Ascending aorta (tissue), 2 donors: ENCODE measurements at regions of chr22 and their contacts with region 1.

Region 1: DNA sequence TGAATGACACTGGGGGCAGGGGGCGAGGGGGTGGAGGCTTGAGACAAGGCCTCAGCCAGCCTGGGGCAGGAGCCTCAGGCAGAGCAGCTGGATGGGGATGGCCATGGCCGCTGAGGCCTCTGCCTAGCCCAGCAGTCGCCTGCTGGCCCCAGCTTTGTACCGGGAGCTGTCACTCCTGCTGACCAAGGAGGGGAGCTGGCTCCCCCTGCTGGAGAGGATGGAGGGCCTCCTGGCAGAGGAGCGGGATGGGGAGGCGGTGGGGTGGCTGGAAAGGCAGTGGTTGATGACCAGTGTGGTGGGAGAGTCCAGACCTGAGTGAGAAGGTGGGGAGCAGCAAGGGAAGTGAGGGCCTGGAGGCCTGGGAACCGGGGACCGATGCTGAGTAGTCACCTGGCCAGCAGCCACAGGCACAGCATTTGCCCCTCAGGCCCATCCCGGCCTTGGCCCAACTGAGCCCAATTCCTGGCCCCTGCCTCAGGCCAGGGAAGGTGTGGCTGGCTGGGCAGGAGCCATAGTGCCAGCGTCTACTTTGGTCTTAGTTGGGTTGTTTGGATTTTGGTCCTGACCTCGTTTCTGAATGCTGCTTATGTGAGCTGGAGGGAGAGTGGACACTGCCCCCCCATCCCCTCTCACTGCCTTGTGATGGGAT is 6.0 kb upstream of the SUSD2 start:
- DNase-seq: peak in 1 of 2 donors; percentile 92
- H3K4me3 ChIP-seq: no peak overlapping the region
- H3K27ac ChIP-seq: peak overlapping the region; percentile 84 to 92
- H3K4me1 ChIP-seq: peaks cover 15 to 35% of the 10 kb centered on the region in 2 donors
- H3K27me3 ChIP-seq: no peaks in the 10 kb centered on the region
- CTCF ChIP-seq: peak; percentile 92 to 94 (median 92)

Region 2: GRCh38 chr22:23893943-23894709 is 281.2 kb before region 1 on chr22 and contains the start of gene MIF:
- intact Hi-C with region 1: loop called (anchors 2 kb)
- DNase-seq: peak; percentile 78 to 97
- H3K4me3 ChIP-seq: peak within 1 kb of the TSS; percentile 87 to 89
- H3K27ac ChIP-seq: peak within 1 kb of the TSS; percentile 88 to 94
- H3K4me1 ChIP-seq: peaks cover 4 to 16% of the 10 kb centered on the region in 2 donors
- H3K27me3 ChIP-seq: no peaks in the 10 kb centered on the region
- CTCF ChIP-seq: peak; percentile 72 to 83 (median 82)
- total RNA-seq, gene MIF: 527 TPM

Region 3: DNA sequence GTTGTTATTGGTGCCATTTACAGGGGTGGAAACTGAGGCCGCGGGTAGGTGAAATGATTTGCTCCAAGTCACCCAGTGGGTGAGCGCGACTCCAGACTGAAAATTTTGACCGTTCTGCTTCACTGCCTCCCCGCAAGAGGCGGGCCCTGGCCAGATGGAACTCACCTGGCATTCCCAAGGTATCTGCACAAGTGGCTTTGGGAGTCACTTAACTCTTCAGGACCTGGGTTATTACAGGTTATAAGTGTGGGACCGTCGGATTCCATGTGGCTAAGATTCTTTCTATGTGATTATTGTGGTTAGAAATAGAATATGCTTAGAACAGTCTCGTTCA is 163.6 kb before region 1 on chr22:
- intact Hi-C with region 1: loop called (anchors 10 kb)
- DNase-seq: no peak
- H3K4me3 ChIP-seq: peak overlapping the region; percentile 89 to 97
- H3K27ac ChIP-seq: peak overlapping the region; percentile 62 to 69
- H3K4me1 ChIP-seq: peaks cover 4 to 5% of the 10 kb centered on the region in 2 donors
- H3K27me3 ChIP-seq: no peaks in the 10 kb centered on the region
- CTCF ChIP-seq: no peak

Region 4: GRCh38 chr22:24060375-24060788 is 114.9 kb before region 1 on chr22:
- intact Hi-C with region 1: loop called (anchors 5 kb)
- DNase-seq: peak in 1 of 2 donors; percentile 79
- H3K4me3 ChIP-seq: no peak overlapping the region
- H3K27ac ChIP-seq: peak overlapping the region; percentile 38 to 47
- H3K4me1 ChIP-seq: peaks cover 5 to 19% of the 10 kb centered on the region in 2 donors
- H3K27me3 ChIP-seq: no peaks in the 10 kb centered on the region
- CTCF ChIP-seq: no peak

Region 5: DNA sequence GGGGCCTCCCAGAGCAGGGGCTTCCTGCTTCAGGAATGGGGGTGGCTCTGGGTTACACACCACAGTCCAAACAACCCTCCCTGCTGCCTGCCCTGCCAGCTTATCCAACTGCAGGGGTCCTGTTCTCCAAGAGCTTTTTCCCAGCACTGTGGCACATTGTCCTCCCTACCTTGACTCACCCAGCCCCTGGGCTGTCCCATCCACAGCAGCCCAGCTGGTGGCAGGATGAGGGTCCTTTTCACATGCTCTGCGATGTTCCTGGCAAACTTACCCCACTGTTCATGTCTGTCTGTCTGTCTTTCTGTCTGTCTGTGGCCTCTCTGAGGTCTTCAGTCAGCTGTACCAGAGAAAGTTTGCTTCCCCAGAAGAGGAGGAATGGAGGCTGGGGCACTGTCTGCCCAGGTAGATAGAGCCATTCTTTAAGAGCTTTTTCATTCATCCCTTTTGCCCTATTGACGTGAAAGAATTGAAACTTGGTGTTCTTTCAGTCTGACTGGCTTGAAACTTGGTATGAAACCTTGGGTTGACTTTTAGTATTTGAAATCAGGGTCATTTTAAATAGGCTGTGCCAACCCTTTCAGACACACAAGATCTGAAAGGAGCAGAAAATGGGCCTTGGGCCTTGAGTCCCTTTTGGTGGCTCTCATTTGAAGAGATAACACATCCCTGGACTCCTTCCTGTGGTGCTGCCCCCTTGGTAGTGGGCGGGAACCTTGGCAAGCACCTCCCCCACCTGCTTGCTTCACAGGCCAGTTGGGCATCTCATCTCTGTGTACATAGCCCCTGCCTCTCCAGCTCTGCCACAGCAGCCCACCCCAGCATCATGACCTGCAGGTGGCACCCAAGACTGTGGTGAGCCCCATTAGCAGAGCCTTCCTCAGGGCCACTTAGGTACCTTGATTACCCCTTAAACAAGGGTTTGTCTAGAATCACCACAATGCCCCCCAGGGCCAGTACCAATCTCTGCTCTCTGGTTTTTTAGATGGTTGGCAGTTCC is 68.6 kb before region 1 on chr22:
- intact Hi-C with region 1: loop called (anchors 1 kb)
- DNase-seq: no peak
- H3K4me3 ChIP-seq: no peak overlapping the region
- H3K27ac ChIP-seq: peak overlapping the region; percentile 75 to 83
- H3K4me1 ChIP-seq: peaks cover 14 to 17% of the 10 kb centered on the region in 2 donors
- H3K27me3 ChIP-seq: no peaks in the 10 kb centered on the region
- CTCF ChIP-seq: peak in 2 of 3 experiments; percentile 14 to 47

Region 6: GRCh38 chr22:24133187-24133965 is 41.9 kb before region 1 on chr22:
- intact Hi-C with region 1: loop called (anchors 2 kb)
- DNase-seq: no peak
- H3K4me3 ChIP-seq: no peak overlapping the region
- H3K27ac ChIP-seq: peak overlapping the region; percentile 36 to 38
- H3K4me1 ChIP-seq: peaks cover 3 to 24% of the 10 kb centered on the region in 2 donors
- H3K27me3 ChIP-seq: no peaks in the 10 kb centered on the region
- CTCF ChIP-seq: peak; percentile 24 to 39 (median 39)

Region 7: GRCh38 chr22:24156913-24157821 is 18.1 kb before region 1 on chr22:
- intact Hi-C with region 1: loop called (anchors 1 kb)
- DNase-seq: peak; percentile 39 to 91
- H3K4me3 ChIP-seq: peak overlapping the region; percentile 74 to 92
- H3K27ac ChIP-seq: peak overlapping the region; percentile 80 to 89
- H3K4me1 ChIP-seq: peaks cover 18 to 45% of the 10 kb centered on the region in 2 donors
- H3K27me3 ChIP-seq: no peaks in the 10 kb centered on the region
- CTCF ChIP-seq: peak; percentile 79 to 84 (median 82)